HepG2 (cell line): ENCODE measurements at regions of chr4 and their contacts with region 1.

Region 1: GRCh38 chr4:6673660-6674499 is 19.8 kb upstream of the S100P start:
- DNase-seq: peak; percentile 90
- ATAC-seq: peak; percentile 77
- H3K4me3 ChIP-seq: peak overlapping the region; percentile 61 to 78 (median 68); a peak in 5 of 6 replicates
- H3K27ac ChIP-seq: peak overlapping the region; percentile 91
- H3K4me1 ChIP-seq: peaks cover 41% of the 10 kb centered on the region
- H3K27me3 ChIP-seq: no peaks in the 10 kb centered on the region
- CTCF ChIP-seq: peak; percentile 47
- EP300 ChIP-seq: no peak
- POLR2A ChIP-seq: peak in 1 of 2 experiments; percentile 35; a peak in 1 of 4 replicates
- RAD21 ChIP-seq: 0 out of 2 replicates have a peak, but pooled peaks have one; percentile 38

Region 2: GRCh38 chr4:6562931-6563901 is 110.7 kb before region 1 on chr4:
- CTCF ChIA-PET with region 1: no interaction called
- POLR2A ChIA-PET with region 1: no interaction called
- in situ Hi-C with region 1: no loop called
- intact Hi-C with region 1: no loop called
- DNase-seq: no peak
- ATAC-seq: peak; percentile 38
- H3K4me3 ChIP-seq: peak overlapping the region; percentile 30 to 46 (median 31); a peak in 4 of 6 replicates
- H3K27ac ChIP-seq: no peak overlapping the region
- H3K4me1 ChIP-seq: no peaks in the 10 kb centered on the region
- H3K27me3 ChIP-seq: peaks cover 22 to 87% of the 10 kb centered on the region in 2 experiments; a peak in 4 of 5 replicates
- CTCF ChIP-seq: no peak
- EP300 ChIP-seq: no peak
- POLR2A ChIP-seq: no peak
- RAD21 ChIP-seq: no peak

Region 3: GRCh38 chr4:6633041-6633906 is 40.6 kb before region 1 on chr4:
- CTCF ChIA-PET with region 1: no interaction called
- POLR2A ChIA-PET with region 1: interaction called, 15 read pairs
- in situ Hi-C with region 1: no loop called
- intact Hi-C with region 1: no loop called
- DNase-seq: peak; percentile 82
- ATAC-seq: peak; percentile 99
- H3K4me3 ChIP-seq: peak overlapping the region; percentile 20 to 65 (median 49); a peak in 5 of 6 replicates
- H3K27ac ChIP-seq: peak overlapping the region; percentile 83
- H3K4me1 ChIP-seq: peaks cover 28% of the 10 kb centered on the region
- H3K27me3 ChIP-seq: no peaks in the 10 kb centered on the region
- CTCF ChIP-seq: peak; percentile 23; the same call in 1 of the 2 replicates
- EP300 ChIP-seq: peak in 1 of 2 experiments; percentile 33; a peak in 1 of 4 replicates
- POLR2A ChIP-seq: peak; percentile 76 to 85
- RAD21 ChIP-seq: no peak

Region 4: DNA sequence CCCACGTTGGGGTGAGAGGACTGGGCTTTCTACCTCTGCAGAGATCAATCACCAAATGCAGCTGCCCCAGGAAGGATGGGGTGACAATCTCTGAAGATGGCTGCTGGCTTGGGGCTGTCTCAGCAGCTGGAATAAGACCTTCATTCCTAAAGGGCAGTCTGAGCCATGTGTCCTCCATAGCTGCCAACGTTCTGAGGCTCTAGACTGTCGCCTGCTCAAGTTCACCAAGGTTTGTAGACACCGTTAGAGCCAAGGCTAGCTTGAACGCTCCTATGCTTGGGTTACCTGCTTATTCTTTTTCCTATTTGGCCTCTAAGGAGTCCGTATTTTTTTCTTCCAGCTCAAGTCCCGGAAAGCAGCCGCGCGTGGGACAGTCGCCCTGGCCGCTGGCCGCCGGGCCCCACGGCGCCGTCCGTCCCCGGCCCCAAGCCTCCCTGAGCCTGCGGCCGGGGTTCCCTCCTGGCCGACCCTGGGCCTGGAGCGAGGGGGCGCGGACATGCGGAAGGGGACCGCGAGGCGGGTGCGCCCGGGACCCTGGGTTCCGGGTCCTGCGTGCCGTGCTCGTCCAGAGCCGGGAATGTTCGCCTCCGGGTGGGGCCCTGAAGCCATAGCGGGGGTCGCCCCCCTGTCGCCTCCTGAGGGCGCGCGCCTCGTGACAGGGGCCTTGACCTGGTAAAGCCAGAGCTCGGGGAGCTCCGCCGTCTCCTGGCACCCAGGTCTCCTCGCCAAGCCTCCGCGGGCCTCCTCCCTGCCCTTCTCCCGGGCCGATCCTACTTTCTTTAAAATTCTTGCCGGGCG is 10.1 kb before region 1 on chr4:
- CTCF ChIA-PET with region 1: no interaction called
- POLR2A ChIA-PET with region 1: interaction called, 31 read pairs
- in situ Hi-C with region 1: no loop called
- intact Hi-C with region 1: no loop called
- DNase-seq: no peak
- ATAC-seq: no peak
- H3K4me3 ChIP-seq: no peak overlapping the region
- H3K27ac ChIP-seq: no peak overlapping the region
- H3K4me1 ChIP-seq: peaks cover 4% of the 10 kb centered on the region
- H3K27me3 ChIP-seq: no peaks in the 10 kb centered on the region
- CTCF ChIP-seq: no peak
- EP300 ChIP-seq: no peak
- POLR2A ChIP-seq: no peak
- RAD21 ChIP-seq: no peak

Region 5: DNA sequence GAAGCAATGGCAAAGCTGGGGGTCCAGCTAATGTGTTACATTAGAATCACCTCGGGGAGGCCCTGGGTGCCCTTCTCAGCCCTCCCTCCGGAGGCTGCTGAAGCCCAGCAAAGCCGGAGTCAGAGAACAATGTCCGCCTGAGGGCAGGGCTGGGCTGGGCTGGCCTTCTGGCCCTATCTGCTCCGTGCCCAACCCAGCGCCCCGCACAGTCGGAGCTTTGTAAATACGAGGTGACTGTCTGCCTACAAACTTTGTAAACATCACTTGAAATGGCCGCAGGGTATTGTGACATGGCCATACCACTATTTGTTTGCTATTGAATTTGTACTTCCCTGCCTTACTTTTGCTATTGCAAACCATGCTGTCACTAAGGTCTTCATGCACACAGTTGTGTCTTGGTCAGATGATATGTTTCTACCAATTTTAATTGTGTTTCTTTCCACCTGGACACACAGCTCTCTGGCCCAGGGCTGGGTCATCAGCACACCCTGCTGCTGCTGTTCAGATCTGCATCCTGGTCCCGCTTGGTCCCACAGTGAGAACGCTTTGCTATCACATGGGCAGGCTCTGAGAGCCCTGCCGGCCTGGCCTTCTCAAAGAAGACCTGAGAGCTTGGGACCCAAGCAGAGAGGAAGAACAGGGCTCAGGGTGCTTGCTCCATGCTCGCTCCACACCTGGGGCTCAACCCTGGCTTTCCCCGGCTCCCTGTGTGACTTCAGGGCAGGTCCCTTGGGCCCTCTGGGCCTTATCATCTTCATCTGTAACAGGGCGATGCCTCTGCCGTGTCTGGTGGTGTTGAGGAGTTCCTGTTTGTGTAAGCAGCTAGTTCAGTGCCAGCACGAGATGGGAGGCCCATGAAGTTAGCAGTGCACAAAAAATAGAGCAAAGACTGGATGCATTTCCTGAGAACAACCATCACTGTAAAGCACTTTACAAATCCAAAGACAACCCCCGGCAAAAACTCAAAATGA is 22.1 kb after region 1 on chr4:
- CTCF ChIA-PET with region 1: interaction called, 4 read pairs
- POLR2A ChIA-PET with region 1: interaction called, 122 read pairs
- in situ Hi-C with region 1: no loop called
- intact Hi-C with region 1: no loop called
- DNase-seq: peak; percentile 96
- ATAC-seq: peak; percentile 87
- H3K4me3 ChIP-seq: peak overlapping the region; percentile 82 to 96 (median 83)
- H3K27ac ChIP-seq: peak overlapping the region; percentile 84
- H3K4me1 ChIP-seq: peaks cover 60% of the 10 kb centered on the region
- H3K27me3 ChIP-seq: no peaks in the 10 kb centered on the region; a peak in 1 of 5 replicates
- CTCF ChIP-seq: peak; percentile 66
- EP300 ChIP-seq: peak; percentile 74 to 84
- POLR2A ChIP-seq: peak in 1 of 2 experiments; percentile 67; a peak in 2 of 4 replicates
- RAD21 ChIP-seq: peak; percentile 70